CD14-positive monocyte (primary cell): ENCODE measurements at regions of chr2 and their contacts with region 1.

Region 1: DNA sequence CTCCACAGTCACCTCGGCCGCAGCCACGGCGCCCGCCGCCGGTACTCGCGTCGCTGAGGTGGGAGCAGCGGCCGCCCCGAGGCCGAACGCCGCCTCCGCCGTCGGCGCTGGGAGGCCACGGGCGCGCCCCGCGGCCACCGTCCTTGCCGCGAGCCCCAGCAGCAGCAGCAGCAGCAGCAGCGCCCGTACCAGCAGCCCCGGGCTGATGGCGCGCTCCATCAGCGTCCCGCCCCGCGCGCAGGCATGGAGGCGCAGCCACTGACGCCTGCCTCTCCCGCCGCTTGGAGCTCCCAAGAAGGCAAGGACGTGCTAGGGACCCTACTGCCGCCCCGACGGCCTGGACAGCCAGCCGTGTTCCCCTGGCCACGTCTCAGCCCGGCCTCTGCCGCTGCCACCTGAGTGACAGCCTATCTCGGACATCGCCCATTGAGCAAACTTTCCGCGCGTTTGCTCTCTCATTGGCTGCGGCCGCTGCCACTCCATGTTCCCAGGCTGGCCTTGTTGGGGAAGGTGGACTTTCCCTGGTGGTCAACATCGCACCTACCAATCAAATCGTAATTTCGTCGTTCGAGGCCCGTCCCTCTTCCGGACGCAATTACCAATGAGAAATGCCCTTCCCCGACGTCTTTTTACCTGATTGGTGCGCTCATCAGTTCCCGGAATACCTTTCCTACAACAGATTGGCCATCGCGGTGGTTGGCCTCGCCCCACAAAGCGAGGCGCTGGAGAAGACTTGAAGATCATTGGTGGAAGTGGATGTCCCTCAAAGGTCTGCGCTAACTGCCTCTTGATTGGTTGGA is at the start of gene EIF2AK3:
- DNase-seq: peak; percentile 100
- H3K4me3 ChIP-seq: peak within 1 kb of the TSS; percentile 61 to 89 (median 84)
- H3K4me3 Mint-ChIP-seq: peak within 1 kb of the TSS; percentile 93 to 96
- H3K27ac ChIP-seq: peak within 1 kb of the TSS; percentile 99
- H3K27ac Mint-ChIP-seq: peak within 1 kb of the TSS in 6 of 7 donors; percentile 77 to 95 (median 91)
- H3K4me1 ChIP-seq: peaks cover 16 to 22% of the 10 kb centered on the region in 2 donors
- H3K4me1 Mint-ChIP-seq: peaks cover 9% of the 10 kb centered on the region
- H3K27me3 ChIP-seq: no peaks in the 10 kb centered on the region
- H3K27me3 Mint-ChIP-seq: peaks cover 0 to 5% (median 2%) of the 10 kb centered on the region in 3 donors
- CTCF ChIP-seq: no peak
- polyA plus RNA-seq, gene EIF2AK3: 2.0 to 6.6 (median 2.3) TPM

Region 2: GRCh38 chr2:88055371-88056128 is 571.7 kb before region 1 on chr2 and contains the start of gene KRCC1:
- intact Hi-C with region 1: loop called in 1 of 2 experiments (anchors 10 kb)
- DNase-seq: peak; percentile 97 to 99 (median 98)
- H3K4me3 ChIP-seq: peak within 1 kb of the TSS; percentile 83 to 94 (median 87)
- H3K4me3 Mint-ChIP-seq: peak within 1 kb of the TSS; percentile 96 to 97
- H3K27ac ChIP-seq: peak within 1 kb of the TSS; percentile 81 to 99
- H3K27ac Mint-ChIP-seq: peak within 1 kb of the TSS; percentile 94 to 99 (median 97)
- H3K4me1 ChIP-seq: peaks cover 25 to 29% of the 10 kb centered on the region in 2 donors
- H3K4me1 Mint-ChIP-seq: peaks cover 43% of the 10 kb centered on the region
- H3K27me3 ChIP-seq: no peaks in the 10 kb centered on the region
- H3K27me3 Mint-ChIP-seq: no peaks in the 10 kb centered on the region
- CTCF ChIP-seq: no peak
- polyA plus RNA-seq, gene KRCC1: 10.8 to 31.6 (median 24.7) TPM

Region 3: GRCh38 chr2:88590998-88591613 is 36.1 kb before region 1 on chr2:
- intact Hi-C with region 1: loop called in 1 of 2 experiments (anchors 5 kb)
- DNase-seq: peak; percentile 30 to 58 (median 49)
- H3K4me3 ChIP-seq: no peak overlapping the region
- H3K4me3 Mint-ChIP-seq: no peak overlapping the region
- H3K27ac ChIP-seq: no peak overlapping the region
- H3K27ac Mint-ChIP-seq: peak overlapping the region in 3 of 7 donors; percentile 21 to 60 (median 22)
- H3K4me1 ChIP-seq: no peaks in the 10 kb centered on the region
- H3K4me1 Mint-ChIP-seq: no peaks in the 10 kb centered on the region
- H3K27me3 ChIP-seq: no peaks in the 10 kb centered on the region
- H3K27me3 Mint-ChIP-seq: no peaks in the 10 kb centered on the region
- CTCF ChIP-seq: peak; percentile 80

Region 4: DNA sequence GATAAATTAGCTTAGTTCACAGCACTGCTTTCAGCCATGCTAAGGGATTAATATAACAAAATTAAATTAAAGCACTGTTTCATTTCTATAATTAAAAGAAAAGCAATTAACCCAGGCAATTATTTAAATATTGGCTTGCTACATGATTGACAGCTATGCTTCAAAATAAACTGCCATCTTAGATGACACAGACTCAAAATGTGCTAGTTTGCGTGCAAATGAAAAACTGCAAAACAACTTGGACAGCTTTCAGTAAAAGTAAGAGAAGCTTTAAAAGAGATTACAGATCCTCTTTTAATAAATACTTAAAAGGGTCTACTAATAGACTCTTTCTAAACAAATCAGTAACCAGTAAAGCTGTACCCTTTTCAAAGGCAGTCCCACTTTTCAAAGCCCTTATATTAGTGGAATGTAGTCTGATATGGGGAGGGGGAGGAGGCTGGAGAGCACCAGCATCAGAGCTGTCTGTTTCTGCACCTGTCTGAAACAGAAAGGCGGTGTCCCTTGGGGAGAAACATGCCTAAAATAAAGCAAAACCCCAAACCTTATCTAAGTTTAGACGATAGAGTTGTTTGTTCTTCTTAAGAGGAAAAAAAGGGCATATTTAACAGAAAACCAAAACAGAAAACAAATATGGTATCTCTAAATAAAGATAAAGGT is 20.8 kb before region 1 on chr2:
- intact Hi-C with region 1: loop called in 1 of 2 experiments (anchors 2 kb)
- DNase-seq: no peak
- H3K4me3 ChIP-seq: no peak overlapping the region
- H3K4me3 Mint-ChIP-seq: no peak overlapping the region
- H3K27ac ChIP-seq: no peak overlapping the region
- H3K27ac Mint-ChIP-seq: peak overlapping the region in 1 of 7 donors; percentile 33
- H3K4me1 ChIP-seq: no peaks in the 10 kb centered on the region
- H3K4me1 Mint-ChIP-seq: no peaks in the 10 kb centered on the region
- H3K27me3 ChIP-seq: no peaks in the 10 kb centered on the region
- H3K27me3 Mint-ChIP-seq: peaks cover 0 to 2% (median 0%) of the 10 kb centered on the region in 3 donors
- CTCF ChIP-seq: no peak

Region 5: GRCh38 chr2:88691339-88692183 is 64.3 kb after region 1 on chr2 and contains the start of gene RPIA:
- intact Hi-C with region 1: loop called (anchors 2 to 5 kb)
- DNase-seq: peak; percentile 98
- H3K4me3 ChIP-seq: peak within 1 kb of the TSS; percentile 85 to 91 (median 86)
- H3K4me3 Mint-ChIP-seq: peak within 1 kb of the TSS; percentile 90 to 95
- H3K27ac ChIP-seq: peak within 1 kb of the TSS; percentile 60 to 86
- H3K27ac Mint-ChIP-seq: peak within 1 kb of the TSS; percentile 91 to 96 (median 95)
- H3K4me1 ChIP-seq: peaks cover 33 to 34% of the 10 kb centered on the region in 2 donors
- H3K4me1 Mint-ChIP-seq: peaks cover 41% of the 10 kb centered on the region
- H3K27me3 ChIP-seq: no peaks in the 10 kb centered on the region
- H3K27me3 Mint-ChIP-seq: peaks cover 0 to 4% (median 3%) of the 10 kb centered on the region in 3 donors
- CTCF ChIP-seq: peak; percentile 71
- polyA plus RNA-seq, gene RPIA: 12.4 to 23.1 (median 17.9) TPM